ENCODE measurements at regions of chr4 and their contacts with region 1.

Region 1: GRCh38 chr4:123986268-123986798 is 589.7 kb downstream of the SPRY1 start:
- DNase-seq: peak in 4 of 5 donors; percentile 67 to 81 (median 74)
- ATAC-seq: peak; percentile 61 to 92 (median 87)
- H3K4me3 ChIP-seq: no peak overlapping the region
- H3K27ac ChIP-seq: peak overlapping the region; percentile 31 to 86 (median 68)
- H3K4me1 ChIP-seq: peaks cover 0 to 30% (median 14%) of the 10 kb centered on the region in 12 donors
- H3K27me3 ChIP-seq: no peaks in the 10 kb centered on the region
- CTCF ChIP-seq: no peak
- POLR2A ChIP-seq: no peak

Region 2: DNA sequence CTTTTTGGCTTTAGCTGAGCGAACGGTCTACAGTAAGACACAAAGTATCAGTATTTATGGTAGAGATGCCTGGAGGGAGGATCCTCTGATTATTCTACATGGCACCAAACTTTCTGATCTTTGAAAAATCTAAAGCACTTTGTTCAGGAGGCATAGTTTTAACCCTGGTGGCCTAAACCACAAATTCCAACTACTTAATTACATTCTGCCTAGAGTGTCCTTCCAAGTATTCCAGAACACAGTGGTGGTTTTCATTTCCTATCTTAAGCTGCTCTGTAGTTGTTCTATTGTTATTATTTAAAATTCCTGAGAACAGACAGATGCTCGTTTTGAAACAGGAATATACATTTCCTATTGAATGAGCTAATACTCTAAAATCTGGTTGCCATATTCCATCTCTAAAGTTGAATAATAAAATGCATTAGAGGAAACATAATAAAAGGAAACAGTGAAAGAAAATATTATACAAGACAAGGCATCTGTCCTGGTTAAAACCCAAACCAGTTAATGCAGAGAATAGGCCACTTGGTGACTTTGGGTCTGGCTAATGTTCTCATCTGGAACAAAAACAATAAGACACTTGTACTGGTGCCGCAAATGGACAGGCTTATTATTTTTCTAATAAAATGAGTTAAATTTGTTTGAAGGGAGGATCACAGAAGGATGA is 67.7 kb after region 1 on chr4:
- intact Hi-C with region 1: loop called in 1 of 10 experiments (anchors 10 kb)
- DNase-seq: no peak
- ATAC-seq: no peak
- H3K4me3 ChIP-seq: no peak overlapping the region
- H3K27ac ChIP-seq: peak overlapping the region in 2 of 12 donors; percentile 4 to 55
- H3K4me1 ChIP-seq: no peaks in the 10 kb centered on the region
- H3K27me3 ChIP-seq: no peaks in the 10 kb centered on the region
- CTCF ChIP-seq: no peak
- POLR2A ChIP-seq: no peak

Measured in heart left ventricle (tissue), 16 donors.